ENCODE measurements at regions of chr20 and their contacts with region 1.

Region 1: DNA sequence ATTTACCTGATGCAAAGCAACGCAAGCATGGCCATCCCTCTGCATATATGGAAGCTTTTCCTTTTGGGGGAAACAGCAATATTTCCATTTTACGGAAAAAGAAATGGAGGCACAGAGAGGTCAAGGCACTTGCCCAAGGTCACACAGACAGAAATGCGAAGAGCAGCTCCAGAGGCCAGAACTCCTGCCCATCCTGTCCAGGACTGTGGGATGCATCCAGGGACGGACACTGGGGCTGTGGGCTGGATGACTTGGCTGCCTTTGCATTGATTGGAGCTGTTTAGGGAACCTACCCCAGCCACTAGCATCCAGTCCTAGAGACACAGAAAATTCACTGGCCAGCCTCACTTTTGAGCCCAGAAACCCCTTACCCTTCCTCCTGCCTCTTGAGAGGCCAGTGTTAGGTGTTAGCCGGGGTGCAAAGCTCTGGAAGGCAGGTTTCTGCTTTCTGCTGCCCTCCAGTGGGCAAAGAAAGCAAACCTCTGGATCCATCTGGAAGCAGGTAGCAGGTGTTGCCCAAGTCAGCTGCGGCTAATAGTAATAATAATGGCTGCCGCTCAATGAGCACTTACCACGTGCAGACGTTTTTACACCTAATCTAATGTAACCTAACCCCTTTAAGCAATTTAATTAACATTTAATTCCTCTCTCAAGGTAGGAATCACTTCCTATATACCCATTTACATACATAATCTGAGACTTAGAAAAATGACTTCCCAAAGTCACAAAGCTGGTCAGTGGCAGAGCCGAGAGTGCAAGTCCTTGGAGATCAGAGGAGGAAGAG is 31.7 kb upstream of the CCN5 start:
- DNase-seq: peak; percentile 63
- H3K4me3 Mint-ChIP-seq: no peak overlapping the region
- H3K27ac Mint-ChIP-seq: no peak overlapping the region
- H3K4me1 Mint-ChIP-seq: peaks cover 18% of the 10 kb centered on the region
- H3K27me3 Mint-ChIP-seq: no peaks in the 10 kb centered on the region
- CTCF ChIP-seq: peak; percentile 34

Region 2: GRCh38 chr20:44642203-44643153 is 41.0 kb before region 1 on chr20:
- CTCF ChIA-PET with region 1: interaction called, 18 read pairs
- POLR2A ChIA-PET with region 1: interaction called, 7 read pairs
- intact Hi-C with region 1: no loop called
- DNase-seq: peak; percentile 89
- H3K4me3 Mint-ChIP-seq: peak overlapping the region; percentile 3
- H3K27ac Mint-ChIP-seq: peak overlapping the region; percentile 89
- H3K4me1 Mint-ChIP-seq: peaks cover 33% of the 10 kb centered on the region
- H3K27me3 Mint-ChIP-seq: no peaks in the 10 kb centered on the region
- CTCF ChIP-seq: no peak

Region 3: DNA sequence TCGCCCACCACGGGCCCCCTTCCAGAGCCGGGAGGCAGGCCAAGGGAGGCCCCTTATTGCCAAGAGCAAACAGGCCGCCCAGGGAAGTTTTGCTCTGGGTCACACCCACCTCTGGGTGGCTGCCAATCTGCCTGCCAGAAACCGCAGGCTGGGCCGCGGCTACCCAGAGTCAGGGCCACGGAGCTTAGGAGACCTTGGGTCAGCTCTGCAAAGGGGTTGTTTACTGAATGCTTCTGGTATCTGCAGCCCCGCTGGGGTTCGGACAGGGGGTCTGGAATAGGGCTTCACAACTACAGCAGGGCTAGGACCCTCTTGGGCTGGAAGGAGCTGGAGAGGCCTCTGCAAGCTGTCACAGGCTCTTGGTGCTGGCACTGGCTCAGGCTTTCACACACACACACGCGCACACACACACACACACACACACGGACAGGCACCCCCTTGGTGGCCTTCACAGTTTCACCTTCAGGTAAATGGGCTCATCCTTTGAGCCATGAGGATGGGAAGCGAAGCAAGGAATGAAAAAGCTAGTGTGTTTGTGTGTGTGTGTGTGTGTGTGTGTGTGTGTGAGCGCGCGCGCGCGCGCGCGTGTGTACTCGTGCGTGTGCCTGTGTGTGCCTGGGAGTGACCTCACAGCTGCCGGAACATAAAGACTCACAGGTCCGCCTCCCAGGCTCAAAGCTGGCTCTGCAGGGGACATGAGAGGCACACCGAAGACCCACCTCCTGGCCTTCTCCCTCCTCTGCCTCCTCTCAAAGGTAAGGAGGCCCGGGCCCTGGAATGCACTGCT is 31.4 kb after region 1 on chr20 and contains the start of gene CCN5:
- CTCF ChIA-PET with region 1: interaction called, 78 read pairs
- POLR2A ChIA-PET with region 1: interaction called, 4 read pairs
- intact Hi-C with region 1: no loop called
- DNase-seq: peak; percentile 94
- H3K4me3 Mint-ChIP-seq: peak within 1 kb of the TSS; percentile 24
- H3K27ac Mint-ChIP-seq: peak within 1 kb of the TSS; percentile 73
- H3K4me1 Mint-ChIP-seq: peaks cover 34% of the 10 kb centered on the region
- H3K27me3 Mint-ChIP-seq: no peaks in the 10 kb centered on the region
- CTCF ChIP-seq: no peak
- total RNA-seq, gene CCN5: 0.93 and 1.4 TPM in 2 replicates

Region 4: DNA sequence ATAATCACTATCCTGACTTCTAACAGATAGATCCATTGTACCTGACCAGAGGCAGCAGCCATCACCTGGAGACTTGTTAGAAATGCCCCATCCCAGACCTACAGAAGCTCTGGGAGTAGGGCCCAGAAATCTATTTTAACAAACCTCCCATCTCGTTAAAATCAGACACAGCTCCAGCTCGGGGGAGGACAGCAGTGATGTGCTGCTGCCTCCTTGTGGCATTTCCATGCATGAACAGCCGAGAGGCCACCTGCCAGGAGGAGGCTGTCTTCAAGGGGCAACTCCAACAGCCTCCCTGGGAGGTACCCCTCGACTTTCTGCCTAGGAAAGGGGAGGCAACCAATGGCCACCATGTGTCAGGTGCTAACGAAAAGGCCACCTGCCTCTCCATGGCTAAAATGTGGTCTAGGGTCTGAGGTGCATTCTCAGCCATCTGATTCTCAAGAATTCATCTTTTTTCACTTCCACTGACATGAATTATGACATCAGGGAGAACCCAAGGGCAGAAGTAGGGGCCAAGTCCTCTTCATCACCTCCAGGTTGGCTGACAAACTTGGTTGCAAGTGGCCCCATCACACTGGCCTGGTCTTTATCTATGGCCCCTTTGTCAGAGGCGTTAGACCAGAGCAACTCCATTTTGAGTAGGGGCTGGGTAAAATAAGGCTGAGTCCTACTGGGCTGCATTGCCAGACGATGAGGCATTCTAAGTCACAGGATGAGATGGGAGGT is 50.0 kb after region 1 on chr20:
- CTCF ChIA-PET with region 1: interaction called, 317 read pairs
- POLR2A ChIA-PET with region 1: interaction called, 113 read pairs
- intact Hi-C with region 1: loop called (anchors 1 kb)
- DNase-seq: peak; percentile 78
- H3K4me3 Mint-ChIP-seq: peak overlapping the region; percentile 24
- H3K27ac Mint-ChIP-seq: peak overlapping the region; percentile 74
- H3K4me1 Mint-ChIP-seq: peaks cover 54% of the 10 kb centered on the region
- H3K27me3 Mint-ChIP-seq: no peaks in the 10 kb centered on the region
- CTCF ChIP-seq: peak; percentile 90

Region 5: GRCh38 chr20:44747166-44748004 is 63.9 kb after region 1 on chr20:
- CTCF ChIA-PET with region 1: interaction called, 59 read pairs
- POLR2A ChIA-PET with region 1: interaction called, 5 read pairs
- intact Hi-C with region 1: no loop called
- DNase-seq: peak; percentile 98
- H3K4me3 Mint-ChIP-seq: peak overlapping the region; percentile 39
- H3K27ac Mint-ChIP-seq: peak overlapping the region; percentile 77
- H3K4me1 Mint-ChIP-seq: peaks cover 20% of the 10 kb centered on the region
- H3K27me3 Mint-ChIP-seq: peaks cover 47% of the 10 kb centered on the region
- CTCF ChIP-seq: peak; percentile 63

Measured in MCF 10A (cell line).